Ascending aorta (tissue), 2 donors: ENCODE measurements at regions of chr17 and their contacts with region 1.

Region 1: DNA sequence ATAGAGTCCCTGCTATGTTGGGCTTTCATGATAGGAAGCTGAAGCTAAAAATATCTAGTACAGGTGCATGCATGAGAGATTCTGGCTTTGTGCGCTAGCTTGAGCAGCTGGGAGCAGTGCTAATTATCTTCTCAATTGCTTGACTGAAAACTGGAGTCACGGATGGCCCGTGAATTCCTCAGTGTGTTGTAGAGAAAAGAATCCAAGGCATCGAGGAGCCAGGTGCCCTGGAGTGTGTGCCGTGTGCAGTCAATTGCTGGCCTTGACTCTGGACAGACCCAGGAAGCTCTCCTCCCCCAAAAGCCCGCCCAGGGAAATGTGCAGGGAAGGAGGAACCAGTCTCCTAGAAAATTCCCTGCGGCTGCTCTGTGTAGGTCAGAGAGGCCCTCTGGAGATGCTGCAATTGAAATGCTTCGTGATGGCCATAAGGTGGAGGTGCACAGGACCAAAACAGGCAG is 14.2 kb downstream of the LGALS3BP start:
- DNase-seq: no peak
- H3K4me3 ChIP-seq: no peak overlapping the region
- H3K27ac ChIP-seq: no peak overlapping the region
- H3K4me1 ChIP-seq: no peaks in the 10 kb centered on the region
- H3K27me3 ChIP-seq: no peaks in the 10 kb centered on the region
- CTCF ChIP-seq: no peak

Region 2: GRCh38 chr17:78908426-78908825 is 57.1 kb before region 1 on chr17:
- intact Hi-C with region 1: loop called (anchors 5 kb)
- DNase-seq: no peak
- H3K4me3 ChIP-seq: no peak overlapping the region
- H3K27ac ChIP-seq: no peak overlapping the region
- H3K4me1 ChIP-seq: peaks cover 0 to 13% of the 10 kb centered on the region in 2 donors
- H3K27me3 ChIP-seq: no peaks in the 10 kb centered on the region
- CTCF ChIP-seq: no peak